Activated B cell treated with CpG ODN at 0.5 μM for 24 hours (primary cell): ENCODE measurements at regions of chr22 and their contacts with region 1.

Region 1: GRCh38 chr22:22959147-22959827 is 71.7 kb downstream of the IGLL5 start:
- DNase-seq: no peak
- ATAC-seq: peak; percentile 63
- H3K4me3 Mint-ChIP-seq: no peak overlapping the region
- H3K27ac Mint-ChIP-seq: no peak overlapping the region
- H3K4me1 Mint-ChIP-seq: peaks cover 15% of the 10 kb centered on the region
- H3K27me3 Mint-ChIP-seq: no peaks in the 10 kb centered on the region
- CTCF ChIP-seq: peak; percentile 94

Region 2: GRCh38 chr22:22342697-22343580 is 616.3 kb before region 1 on chr22:
- CTCF ChIA-PET with region 1: interaction called, 6 read pairs
- POLR2A ChIA-PET with region 1: interaction called, 3 read pairs
- intact Hi-C with region 1: loop called (anchors 5 kb)
- DNase-seq: peak; percentile 56
- ATAC-seq: peak; percentile 59
- H3K4me3 Mint-ChIP-seq: peak overlapping the region; percentile 28
- H3K27ac Mint-ChIP-seq: peak overlapping the region; percentile 68
- H3K4me1 Mint-ChIP-seq: peaks cover 29% of the 10 kb centered on the region
- H3K27me3 Mint-ChIP-seq: no peaks in the 10 kb centered on the region
- CTCF ChIP-seq: peak; percentile 98

Region 3: GRCh38 chr22:22666307-22667091 is 292.8 kb before region 1 on chr22:
- CTCF ChIA-PET with region 1: interaction called, 22 read pairs
- POLR2A ChIA-PET with region 1: interaction called, 3 read pairs
- intact Hi-C with region 1: no loop called
- DNase-seq: peak; percentile 30
- ATAC-seq: peak; percentile 82
- H3K4me3 Mint-ChIP-seq: no peak overlapping the region
- H3K27ac Mint-ChIP-seq: no peak overlapping the region
- H3K4me1 Mint-ChIP-seq: peaks cover 16% of the 10 kb centered on the region
- H3K27me3 Mint-ChIP-seq: peaks cover 2% of the 10 kb centered on the region
- CTCF ChIP-seq: no peak

Region 4: GRCh38 chr22:22753526-22754267 is 205.6 kb before region 1 on chr22:
- CTCF ChIA-PET with region 1: interaction called, 77 read pairs
- POLR2A ChIA-PET with region 1: interaction called, 4 read pairs
- intact Hi-C with region 1: loop called (anchors 1 kb)
- DNase-seq: peak; percentile 55
- ATAC-seq: peak; percentile 89
- H3K4me3 Mint-ChIP-seq: no peak overlapping the region
- H3K27ac Mint-ChIP-seq: peak overlapping the region; percentile 24
- H3K4me1 Mint-ChIP-seq: peaks cover 26% of the 10 kb centered on the region
- H3K27me3 Mint-ChIP-seq: no peaks in the 10 kb centered on the region
- CTCF ChIP-seq: no peak

Region 5: GRCh38 chr22:22870577-22871404 is 88.5 kb before region 1 on chr22:
- CTCF ChIA-PET with region 1: interaction called, 23 read pairs
- POLR2A ChIA-PET with region 1: no interaction called
- intact Hi-C with region 1: no loop called
- DNase-seq: no peak
- ATAC-seq: peak; percentile 43
- H3K4me3 Mint-ChIP-seq: peak overlapping the region; percentile 15
- H3K27ac Mint-ChIP-seq: peak overlapping the region; percentile 30
- H3K4me1 Mint-ChIP-seq: peaks cover 39% of the 10 kb centered on the region
- H3K27me3 Mint-ChIP-seq: peaks cover 2% of the 10 kb centered on the region
- CTCF ChIP-seq: no peak

Region 6: DNA sequence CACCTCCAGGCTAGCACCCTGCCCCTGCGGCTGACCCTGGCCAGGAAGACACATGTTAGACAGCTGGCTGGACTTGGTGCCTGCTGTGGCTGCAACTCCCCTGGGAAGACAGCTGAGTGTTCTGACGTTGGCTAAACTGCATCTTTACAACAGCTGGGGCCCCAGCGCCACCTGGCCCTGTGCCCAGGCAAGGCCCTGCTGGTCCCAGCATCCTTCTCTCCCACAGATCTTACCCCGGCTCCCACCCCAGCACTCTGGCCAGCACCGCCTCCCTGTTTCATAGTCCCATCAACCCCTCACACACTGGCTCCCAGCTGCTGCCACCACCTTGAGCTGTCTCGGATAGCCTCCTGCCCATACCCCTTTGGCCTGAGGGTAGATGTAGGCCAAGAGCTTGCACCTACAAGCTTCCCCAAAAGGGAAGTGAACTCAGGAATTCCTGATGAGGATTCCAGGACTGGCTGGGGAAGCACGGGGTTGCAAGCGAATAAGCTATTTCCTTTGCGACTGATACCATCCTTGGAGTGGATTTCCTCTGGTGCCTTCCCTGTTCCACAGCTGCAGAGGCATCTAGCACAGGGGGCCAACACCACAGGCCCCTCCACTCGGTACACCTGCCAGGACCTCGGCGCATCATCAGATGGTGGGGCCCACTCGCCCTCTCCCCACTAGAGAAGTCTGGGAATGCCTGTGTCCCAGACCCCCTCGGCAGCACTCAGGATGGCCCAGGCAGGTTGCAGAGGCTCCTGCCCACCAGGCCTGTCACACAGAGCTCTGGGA is 154.0 kb after region 1 on chr22:
- CTCF ChIA-PET with region 1: interaction called, 10 read pairs
- POLR2A ChIA-PET with region 1: no interaction called
- intact Hi-C with region 1: no loop called
- DNase-seq: no peak
- ATAC-seq: peak; percentile 31
- H3K4me3 Mint-ChIP-seq: no peak overlapping the region
- H3K27ac Mint-ChIP-seq: no peak overlapping the region
- H3K4me1 Mint-ChIP-seq: no peaks in the 10 kb centered on the region
- H3K27me3 Mint-ChIP-seq: no peaks in the 10 kb centered on the region
- CTCF ChIP-seq: no peak

Region 7: DNA sequence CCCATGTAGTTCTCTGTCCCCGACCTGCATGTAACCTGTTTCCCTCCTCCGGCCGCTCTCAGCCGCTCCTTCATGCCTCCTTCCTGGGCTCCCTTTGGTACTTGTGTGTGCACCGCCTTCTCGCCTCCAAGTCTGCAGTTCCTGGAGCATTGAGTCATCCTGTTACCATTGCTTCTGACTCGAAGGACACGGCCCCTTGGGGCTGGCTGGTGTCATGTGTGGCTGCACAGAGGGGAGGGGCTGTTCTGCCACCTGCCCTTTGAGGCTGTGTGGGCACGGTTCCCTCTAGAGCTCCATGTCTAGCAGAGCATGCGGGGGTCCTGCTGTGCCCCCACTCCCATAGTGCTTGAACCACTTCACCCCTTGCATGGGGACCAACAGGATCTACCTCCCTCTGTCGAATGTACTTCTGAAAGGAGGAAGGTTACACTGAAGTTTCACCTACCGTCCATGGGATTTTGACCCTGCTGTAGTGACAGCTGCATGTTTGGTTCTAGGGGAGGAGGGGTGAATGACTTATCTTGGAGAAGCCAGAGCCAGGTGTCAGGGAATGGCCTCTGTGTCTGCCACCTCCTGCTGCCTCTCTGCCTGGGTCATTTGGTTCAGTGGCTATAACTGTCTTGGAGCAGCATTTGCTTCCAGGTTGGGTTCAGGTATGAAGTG is 260.7 kb after region 1 on chr22:
- CTCF ChIA-PET with region 1: no interaction called
- POLR2A ChIA-PET with region 1: no interaction called
- intact Hi-C with region 1: no loop called
- DNase-seq: peak; percentile 66
- ATAC-seq: peak; percentile 88
- H3K4me3 Mint-ChIP-seq: peak overlapping the region; percentile 74
- H3K27ac Mint-ChIP-seq: peak overlapping the region; percentile 61
- H3K4me1 Mint-ChIP-seq: peaks cover 72% of the 10 kb centered on the region
- H3K27me3 Mint-ChIP-seq: no peaks in the 10 kb centered on the region
- CTCF ChIP-seq: no peak

Region 8: GRCh38 chr22:23385291-23386244 is 426.3 kb after region 1 on chr22:
- CTCF ChIA-PET with region 1: interaction called, 8 read pairs
- POLR2A ChIA-PET with region 1: no interaction called
- intact Hi-C with region 1: loop called (anchors 1 kb)
- DNase-seq: peak; percentile 80
- ATAC-seq: peak; percentile 87
- H3K4me3 Mint-ChIP-seq: no peak overlapping the region
- H3K27ac Mint-ChIP-seq: no peak overlapping the region
- H3K4me1 Mint-ChIP-seq: no peaks in the 10 kb centered on the region
- H3K27me3 Mint-ChIP-seq: peaks cover 14% of the 10 kb centered on the region
- CTCF ChIP-seq: peak; percentile 92